Right lobe of liver (tissue), 6 donors: ENCODE measurements at regions of chr15 and their contacts with region 1.

Region 1: DNA sequence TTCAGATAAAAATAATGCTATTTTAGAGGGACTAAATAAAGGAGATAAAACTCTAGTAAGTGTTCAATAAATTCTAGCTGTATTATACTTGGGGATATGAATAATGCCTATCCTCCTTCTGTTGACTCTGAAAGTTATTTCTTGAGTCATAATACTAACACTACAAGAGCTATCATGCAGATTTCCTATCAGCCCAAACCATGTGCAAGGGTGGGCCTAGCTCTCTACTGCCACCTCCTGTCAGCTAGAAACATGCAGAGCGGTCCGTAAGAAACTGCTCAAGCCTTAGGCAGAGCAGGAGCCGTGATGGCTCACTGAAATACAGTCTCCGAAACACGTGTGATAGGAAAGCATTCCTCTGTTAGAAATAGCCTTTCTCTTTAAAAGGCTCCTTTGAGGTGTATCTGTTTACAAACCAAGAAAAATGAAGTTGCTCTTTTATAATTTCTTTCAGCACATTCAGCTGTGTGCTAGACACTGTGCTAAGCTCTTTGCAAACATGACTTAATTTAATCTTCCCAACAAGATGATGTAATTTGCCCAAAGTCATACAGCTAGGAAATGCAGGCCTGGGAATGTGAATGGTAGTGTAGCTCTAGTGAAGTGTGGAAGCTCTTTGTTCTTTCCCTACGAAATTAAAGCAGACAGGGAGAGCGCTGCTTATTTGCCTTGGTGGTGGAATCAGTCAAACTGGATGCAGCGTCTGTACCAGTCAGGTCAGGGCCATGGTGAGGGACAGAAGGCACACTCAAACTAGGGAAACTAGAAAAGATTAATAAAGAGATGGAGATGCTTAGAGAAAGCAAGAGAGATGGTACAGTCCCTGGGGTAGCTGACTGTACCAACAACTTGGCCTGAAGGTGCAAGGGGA is 43.1 kb downstream of the MTHFS start:
- DNase-seq: peak in 2 of 3 donors; percentile 40 to 60
- ATAC-seq: peak; percentile 88 to 93 (median 90)
- H3K4me3 ChIP-seq: no peak overlapping the region
- H3K27ac ChIP-seq: no peak overlapping the region
- H3K4me1 ChIP-seq: peaks cover 0 to 20% (median 0%) of the 10 kb centered on the region in 4 donors
- H3K27me3 ChIP-seq: no peaks in the 10 kb centered on the region
- CTCF ChIP-seq: peak; percentile 80 to 94 (median 92)
- POLR2A ChIP-seq: no peak

Region 2: DNA sequence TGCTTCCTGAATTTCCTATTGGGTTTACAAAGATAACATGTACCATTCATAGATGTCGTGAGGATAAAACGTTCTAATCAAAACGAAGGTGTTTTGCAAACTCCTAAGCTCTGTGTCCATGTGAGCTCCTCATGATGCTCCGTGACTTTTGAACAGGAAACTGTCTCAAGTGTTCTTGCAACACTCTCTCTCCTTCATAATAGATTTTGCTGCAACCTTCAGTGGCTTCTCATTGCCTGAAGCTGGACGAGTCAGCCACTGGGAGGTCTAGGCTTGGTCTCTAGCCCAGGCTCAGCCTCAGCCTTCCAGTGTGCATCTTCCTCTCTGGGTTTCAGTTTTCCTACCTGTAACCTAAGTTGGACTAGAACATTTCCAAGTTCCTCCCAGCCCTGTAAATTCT is 136.0 kb after region 1 on chr15:
- intact Hi-C with region 1: loop called in 1 of 2 experiments (anchors 10 kb)
- DNase-seq: no peak
- ATAC-seq: peak; percentile 17 to 51 (median 28)
- H3K4me3 ChIP-seq: no peak overlapping the region
- H3K27ac ChIP-seq: no peak overlapping the region
- H3K4me1 ChIP-seq: peaks cover 0 to 10% (median 0%) of the 10 kb centered on the region in 4 donors
- H3K27me3 ChIP-seq: no peaks in the 10 kb centered on the region
- CTCF ChIP-seq: no peak
- POLR2A ChIP-seq: no peak